Activated CD8-positive, alpha-beta T cell treated with anti-CD3 and anti-CD28 coated beads for 36 hours (primary cell): ENCODE measurements at regions of chr16 and their contacts with region 1.

Region 1: DNA sequence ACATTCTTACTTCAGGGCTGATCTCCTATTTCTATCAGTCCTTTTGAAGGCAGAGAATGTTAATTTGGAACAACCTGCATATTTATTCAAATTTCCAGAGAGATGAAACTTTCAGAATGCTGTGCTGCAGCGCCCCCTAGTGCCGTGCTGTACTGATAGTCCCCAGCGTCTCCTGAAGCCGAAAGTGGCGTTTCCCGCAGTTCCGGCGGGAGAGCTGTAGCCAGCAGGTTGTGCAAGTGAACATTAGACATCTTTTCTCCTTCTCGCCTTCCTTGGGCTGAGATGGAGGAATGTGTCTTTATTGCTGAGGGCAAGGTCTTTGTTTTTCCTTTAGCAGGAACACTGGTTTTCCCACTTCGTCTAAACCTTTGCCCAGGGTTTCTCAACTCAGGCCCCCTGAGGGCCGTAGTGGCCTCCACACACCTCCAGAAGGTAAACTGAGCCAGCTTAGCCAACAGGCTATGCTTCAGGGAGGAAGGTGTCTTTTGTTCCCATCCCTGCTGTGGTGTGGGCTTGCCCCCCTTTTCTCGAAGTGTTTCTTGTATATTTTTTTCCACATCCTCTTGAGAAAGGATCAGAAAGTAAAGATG is 26.4 kb downstream of the USP10 start:
- DNase-seq: peak; percentile 92
- ATAC-seq: no peak
- H3K4me3 Mint-ChIP-seq: peak overlapping the region; percentile 25
- H3K27ac Mint-ChIP-seq: no peak overlapping the region
- H3K4me1 Mint-ChIP-seq: peaks cover 78% of the 10 kb centered on the region
- H3K27me3 Mint-ChIP-seq: no peaks in the 10 kb centered on the region
- CTCF ChIP-seq: peak; percentile 100

Region 2: GRCh38 chr16:84617791-84618580 is 108.2 kb before region 1 on chr16 and contains the start of gene COTL1:
- CTCF ChIA-PET with region 1: interaction called, 51 read pairs
- POLR2A ChIA-PET with region 1: interaction called, 5 read pairs
- intact Hi-C with region 1: loop called (anchors 10 kb)
- DNase-seq: peak; percentile 99
- ATAC-seq: peak; percentile 82
- H3K4me3 Mint-ChIP-seq: peak within 1 kb of the TSS; percentile 97
- H3K27ac Mint-ChIP-seq: peak within 1 kb of the TSS; percentile 86
- H3K4me1 Mint-ChIP-seq: peaks cover 36% of the 10 kb centered on the region
- H3K27me3 Mint-ChIP-seq: no peaks in the 10 kb centered on the region
- CTCF ChIP-seq: no peak
- total RNA-seq, gene COTL1: 664 to 677 TPM

Region 3: DNA sequence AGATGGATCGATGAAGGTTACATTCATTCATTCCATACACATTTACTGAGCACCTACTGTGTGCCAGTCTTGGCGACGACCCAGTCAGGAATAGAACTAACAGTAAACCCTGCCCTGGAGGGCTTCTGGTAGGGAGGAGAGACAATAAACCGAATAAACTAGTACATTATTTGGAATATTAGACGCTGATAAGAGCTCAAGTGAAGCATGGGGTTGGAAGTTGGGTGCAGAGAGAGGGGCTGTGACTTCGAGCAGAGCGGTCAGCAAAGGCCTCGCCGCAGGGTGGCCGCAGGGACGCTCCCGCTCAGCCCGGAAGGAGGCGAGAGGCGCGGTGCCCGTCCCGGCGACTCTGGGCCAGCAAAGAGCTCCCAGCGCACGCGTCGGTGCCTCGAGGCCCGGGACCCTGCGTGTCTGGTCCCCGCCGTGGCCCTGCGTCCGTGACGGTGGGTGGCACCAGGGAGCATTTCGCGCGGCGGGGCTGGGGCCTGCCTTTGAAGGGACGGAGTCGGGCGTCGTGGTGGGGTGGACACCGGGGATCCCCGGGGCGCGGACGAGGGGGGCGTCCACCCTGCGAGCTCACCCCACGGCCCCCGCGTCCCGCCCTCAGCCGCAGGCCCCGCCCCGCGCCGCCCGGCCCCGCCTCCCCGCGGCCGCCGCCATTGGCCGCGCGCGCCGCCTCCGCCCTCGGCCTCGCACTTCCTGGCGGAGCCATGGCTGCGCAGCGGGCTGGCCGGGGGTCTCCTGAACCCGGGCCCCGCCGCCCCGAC is 78.2 kb before region 1 on chr16 and contains the start of gene KLHL36:
- CTCF ChIA-PET with region 1: interaction called, 21 read pairs
- POLR2A ChIA-PET with region 1: interaction called, 3 read pairs
- intact Hi-C with region 1: no loop called
- DNase-seq: peak; percentile 67
- ATAC-seq: peak; percentile 89
- H3K4me3 Mint-ChIP-seq: peak within 1 kb of the TSS; percentile 77
- H3K27ac Mint-ChIP-seq: peak within 1 kb of the TSS; percentile 83
- H3K4me1 Mint-ChIP-seq: peaks cover 35% of the 10 kb centered on the region
- H3K27me3 Mint-ChIP-seq: peaks cover 2% of the 10 kb centered on the region
- CTCF ChIP-seq: no peak
- total RNA-seq, gene KLHL36: 41.0 to 44.0 TPM

Region 4: GRCh38 chr16:84680165-84680842 is 45.9 kb before region 1 on chr16:
- CTCF ChIA-PET with region 1: interaction called, 22 read pairs
- POLR2A ChIA-PET with region 1: interaction called, 3 read pairs
- intact Hi-C with region 1: no loop called
- DNase-seq: no peak
- ATAC-seq: no peak
- H3K4me3 Mint-ChIP-seq: no peak overlapping the region
- H3K27ac Mint-ChIP-seq: no peak overlapping the region
- H3K4me1 Mint-ChIP-seq: no peaks in the 10 kb centered on the region
- H3K27me3 Mint-ChIP-seq: peaks cover 4% of the 10 kb centered on the region
- CTCF ChIP-seq: no peak

Region 5: DNA sequence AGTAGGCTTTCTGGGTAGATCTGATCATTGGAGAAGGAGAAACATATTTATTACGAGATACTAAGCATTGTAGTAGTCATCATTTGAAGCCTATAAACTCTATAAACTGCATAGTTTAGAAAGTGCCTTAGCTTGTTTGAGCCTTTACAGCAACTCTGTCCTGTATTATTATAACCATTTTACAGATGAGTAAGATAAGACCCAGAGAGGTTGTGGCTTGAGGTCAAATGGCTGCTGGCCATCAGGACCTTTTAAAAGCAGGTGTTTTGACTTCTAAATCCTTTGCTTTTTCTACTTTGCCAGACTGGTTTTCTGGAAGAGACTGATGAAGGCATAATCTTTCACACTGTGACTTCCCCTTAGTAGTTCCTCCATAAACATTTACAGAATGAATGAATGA is 19.3 kb before region 1 on chr16:
- CTCF ChIA-PET with region 1: interaction called, 84 read pairs
- POLR2A ChIA-PET with region 1: no interaction called
- intact Hi-C with region 1: no loop called
- DNase-seq: no peak
- ATAC-seq: no peak
- H3K4me3 Mint-ChIP-seq: no peak overlapping the region
- H3K27ac Mint-ChIP-seq: no peak overlapping the region
- H3K4me1 Mint-ChIP-seq: peaks cover 63% of the 10 kb centered on the region
- H3K27me3 Mint-ChIP-seq: no peaks in the 10 kb centered on the region
- CTCF ChIP-seq: no peak

Region 6: DNA sequence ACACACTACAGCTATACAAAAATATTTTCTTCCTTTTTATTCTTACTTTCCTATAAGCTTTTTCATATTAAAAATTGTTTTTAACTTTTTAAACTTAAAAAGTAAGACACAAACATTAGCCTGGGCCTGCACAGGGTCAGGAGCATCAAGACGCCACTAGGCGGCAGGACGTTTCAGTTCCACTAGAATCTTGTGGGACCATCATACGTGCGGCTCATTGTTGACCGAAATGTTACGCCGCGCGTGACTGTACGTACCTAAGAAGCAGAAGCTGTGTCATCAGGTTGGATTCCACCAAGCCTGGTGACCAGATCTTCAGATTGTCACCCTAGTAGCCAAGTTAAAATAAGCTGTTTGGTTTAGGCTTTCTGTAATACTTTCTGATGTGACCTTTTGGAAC is 20.7 kb after region 1 on chr16:
- CTCF ChIA-PET with region 1: interaction called, 140 read pairs
- POLR2A ChIA-PET with region 1: no interaction called
- intact Hi-C with region 1: no loop called
- DNase-seq: no peak
- ATAC-seq: no peak
- H3K4me3 Mint-ChIP-seq: no peak overlapping the region
- H3K27ac Mint-ChIP-seq: no peak overlapping the region
- H3K4me1 Mint-ChIP-seq: peaks cover 38% of the 10 kb centered on the region
- H3K27me3 Mint-ChIP-seq: no peaks in the 10 kb centered on the region
- CTCF ChIP-seq: peak; percentile 25